Posterior vena cava (tissue), 2 donors: ENCODE measurements at regions of chr3 and their contacts with region 1.

Region 1: GRCh38 chr3:113136071-113136470 is 75.3 kb upstream of the BOC start:
- DNase-seq: no peak

Region 2: DNA sequence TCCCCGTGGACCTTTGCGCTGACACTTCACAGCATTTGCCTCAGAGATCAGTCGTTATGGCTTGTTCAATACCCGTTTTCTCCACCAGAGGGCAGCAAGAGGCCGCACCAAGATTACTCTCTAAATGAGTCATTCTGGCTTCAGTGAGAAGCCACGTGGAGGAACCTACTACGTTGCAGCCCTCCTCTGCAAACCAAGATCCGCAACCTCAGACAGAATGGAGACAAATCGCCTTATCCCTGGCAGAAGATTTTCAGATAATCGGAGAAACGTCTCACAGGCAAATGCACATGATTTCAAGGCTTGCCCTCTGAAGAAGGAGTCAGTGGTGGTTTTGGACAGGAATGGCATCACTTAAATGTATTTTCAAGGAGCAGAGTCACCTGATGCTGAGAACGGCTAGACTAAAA is 84.8 kb before region 1 on chr3:
- intact Hi-C with region 1: loop called in 1 of 2 experiments (anchors 10 kb)
- DNase-seq: peak; percentile 91

Region 3: DNA sequence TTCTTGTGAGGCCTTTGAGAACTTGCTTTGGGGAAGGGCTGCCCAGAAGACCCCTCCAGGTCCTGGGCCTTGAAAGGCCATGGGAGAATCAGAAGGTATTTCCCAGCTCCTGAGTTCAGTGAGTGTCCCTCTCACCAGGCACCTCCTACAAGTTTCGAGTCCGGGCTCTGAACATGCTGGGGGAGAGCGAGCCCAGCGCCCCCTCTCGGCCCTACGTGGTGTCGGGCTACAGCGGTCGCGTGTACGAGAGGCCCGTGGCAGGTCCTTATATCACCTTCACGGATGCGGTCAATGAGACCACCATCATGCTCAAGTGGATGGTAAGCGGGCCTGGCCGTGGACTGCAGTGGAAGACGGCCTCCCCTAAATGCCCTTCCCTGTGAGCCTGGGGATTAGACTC is 143.6 kb after region 1 on chr3:
- intact Hi-C with region 1: loop called in 1 of 2 experiments (anchors 5 kb)
- DNase-seq: no peak